Breast epithelium (tissue), 4 donors: ENCODE measurements at regions of chr11 and their contacts with region 1.

Region 1: GRCh38 chr11:74179234-74180052 is 8.4 kb downstream of the PPME1 start:
- DNase-seq: no peak
- H3K4me3 ChIP-seq: no peak overlapping the region
- H3K27ac ChIP-seq: no peak overlapping the region
- H3K4me1 ChIP-seq: no peaks in the 10 kb centered on the region
- H3K27me3 ChIP-seq: no peaks in the 10 kb centered on the region
- CTCF ChIP-seq: no peak
- POLR2A ChIP-seq: no peak

Region 2: GRCh38 chr11:73743045-73743444 is 436.4 kb before region 1 on chr11:
- intact Hi-C with region 1: loop called (anchors 5 kb)
- DNase-seq: no peak
- H3K4me3 ChIP-seq: no peak overlapping the region
- H3K27ac ChIP-seq: no peak overlapping the region
- H3K4me1 ChIP-seq: no peaks in the 10 kb centered on the region
- H3K27me3 ChIP-seq: no peaks in the 10 kb centered on the region
- CTCF ChIP-seq: no peak
- POLR2A ChIP-seq: no peak

Region 3: GRCh38 chr11:73866586-73866996 is 312.9 kb before region 1 on chr11:
- intact Hi-C with region 1: no loop called
- DNase-seq: no peak
- H3K4me3 ChIP-seq: no peak overlapping the region
- H3K27ac ChIP-seq: peak overlapping the region in 1 of 2 donors; percentile 7
- H3K4me1 ChIP-seq: no peaks in the 10 kb centered on the region
- H3K27me3 ChIP-seq: no peaks in the 10 kb centered on the region
- CTCF ChIP-seq: no peak
- POLR2A ChIP-seq: no peak